Heart left ventricle (tissue), 16 donors: ENCODE measurements at regions of chr18 and their contacts with region 1.

Region 1: GRCh38 chr18:45248240-45248903 is 366.9 kb upstream of the SLC14A2 start:
- DNase-seq: peak in 4 of 5 donors; percentile 49 to 60 (median 56)
- ATAC-seq: peak; percentile 70 to 93 (median 89)
- H3K4me3 ChIP-seq: no peak overlapping the region
- H3K27ac ChIP-seq: peak overlapping the region; percentile 1 to 89 (median 70)
- H3K4me1 ChIP-seq: peaks cover 0 to 48% (median 35%) of the 10 kb centered on the region in 12 donors
- H3K27me3 ChIP-seq: no peaks in the 10 kb centered on the region
- CTCF ChIP-seq: no peak
- POLR2A ChIP-seq: no peak

Region 2: DNA sequence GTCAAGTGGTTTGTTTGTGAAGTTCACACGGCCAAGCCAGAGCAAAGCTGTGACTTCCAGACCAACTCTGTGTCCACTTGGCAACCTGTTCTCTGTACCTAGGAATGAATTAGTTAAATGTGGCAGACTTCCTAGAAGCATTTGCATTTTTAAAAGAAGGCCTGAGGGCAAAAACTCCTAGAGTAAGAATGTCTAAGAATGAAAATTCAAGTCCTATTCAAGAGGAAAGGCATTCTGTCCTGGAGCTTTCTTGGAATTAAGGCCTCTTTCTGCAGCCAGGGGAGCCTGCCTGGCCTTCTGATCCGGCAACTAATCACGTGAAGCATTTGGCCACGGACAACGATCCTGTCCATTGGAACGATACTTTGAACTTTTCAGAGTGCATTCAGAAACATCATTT is 412.7 kb before region 1 on chr18:
- intact Hi-C with region 1: no loop called
- DNase-seq: no peak
- ATAC-seq: no peak
- H3K4me3 ChIP-seq: no peak overlapping the region
- H3K27ac ChIP-seq: peak overlapping the region in 1 of 12 donors; percentile 53
- H3K4me1 ChIP-seq: peaks cover 0 to 59% (median 16%) of the 10 kb centered on the region in 12 donors
- H3K27me3 ChIP-seq: no peaks in the 10 kb centered on the region
- CTCF ChIP-seq: peak in 2 of 12 donors; percentile 18 to 19
- POLR2A ChIP-seq: no peak

Region 3: DNA sequence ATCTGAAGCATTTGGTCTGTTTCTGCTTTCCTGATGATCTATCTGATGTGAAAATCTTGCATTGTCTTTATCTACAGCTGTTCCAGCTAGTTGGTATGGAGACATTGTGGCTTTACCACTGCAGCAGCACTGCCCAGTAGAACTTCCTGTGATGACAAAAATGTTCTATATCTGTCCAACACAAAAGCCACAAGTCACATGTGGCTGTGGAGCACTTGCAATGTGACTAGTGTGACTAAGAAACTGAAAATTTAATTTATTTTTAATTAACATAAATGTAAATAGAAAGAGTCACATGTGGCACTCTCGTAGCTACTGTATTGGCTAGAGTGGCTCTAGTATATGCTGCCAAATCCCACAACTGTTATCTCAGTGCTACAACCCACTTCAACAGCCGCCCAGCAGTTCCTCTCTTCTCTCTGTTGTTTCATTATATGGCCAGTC is 142.0 kb before region 1 on chr18:
- intact Hi-C with region 1: no loop called
- DNase-seq: no peak
- ATAC-seq: peak in 2 of 4 donors; percentile 60
- H3K4me3 ChIP-seq: no peak overlapping the region
- H3K27ac ChIP-seq: no peak overlapping the region
- H3K4me1 ChIP-seq: peaks cover 0 to 65% (median 5%) of the 10 kb centered on the region in 12 donors
- H3K27me3 ChIP-seq: no peaks in the 10 kb centered on the region
- CTCF ChIP-seq: no peak
- POLR2A ChIP-seq: no peak

Region 4: GRCh38 chr18:45303026-45303425 is 54.7 kb after region 1 on chr18:
- intact Hi-C with region 1: loop called in 1 of 10 experiments (anchors 10 kb)
- DNase-seq: no peak
- ATAC-seq: no peak
- H3K4me3 ChIP-seq: no peak overlapping the region
- H3K27ac ChIP-seq: no peak overlapping the region
- H3K4me1 ChIP-seq: peaks cover 0 to 13% (median 0%) of the 10 kb centered on the region in 12 donors
- H3K27me3 ChIP-seq: no peaks in the 10 kb centered on the region
- CTCF ChIP-seq: no peak
- POLR2A ChIP-seq: no peak

Region 5: GRCh38 chr18:45324495-45325113 is 76.2 kb after region 1 on chr18:
- intact Hi-C with region 1: loop called in 1 of 10 experiments (anchors 10 kb)
- DNase-seq: peak in 2 of 5 donors; percentile 55 to 69
- ATAC-seq: peak in 2 of 4 donors; percentile 72 to 73
- H3K4me3 ChIP-seq: no peak overlapping the region
- H3K27ac ChIP-seq: no peak overlapping the region
- H3K4me1 ChIP-seq: peaks cover 0 to 38% (median 8%) of the 10 kb centered on the region in 12 donors
- H3K27me3 ChIP-seq: no peaks in the 10 kb centered on the region
- CTCF ChIP-seq: no peak
- POLR2A ChIP-seq: no peak